ENCODE measurements at regions of chr2 and their contacts with region 1.

Region 1: DNA sequence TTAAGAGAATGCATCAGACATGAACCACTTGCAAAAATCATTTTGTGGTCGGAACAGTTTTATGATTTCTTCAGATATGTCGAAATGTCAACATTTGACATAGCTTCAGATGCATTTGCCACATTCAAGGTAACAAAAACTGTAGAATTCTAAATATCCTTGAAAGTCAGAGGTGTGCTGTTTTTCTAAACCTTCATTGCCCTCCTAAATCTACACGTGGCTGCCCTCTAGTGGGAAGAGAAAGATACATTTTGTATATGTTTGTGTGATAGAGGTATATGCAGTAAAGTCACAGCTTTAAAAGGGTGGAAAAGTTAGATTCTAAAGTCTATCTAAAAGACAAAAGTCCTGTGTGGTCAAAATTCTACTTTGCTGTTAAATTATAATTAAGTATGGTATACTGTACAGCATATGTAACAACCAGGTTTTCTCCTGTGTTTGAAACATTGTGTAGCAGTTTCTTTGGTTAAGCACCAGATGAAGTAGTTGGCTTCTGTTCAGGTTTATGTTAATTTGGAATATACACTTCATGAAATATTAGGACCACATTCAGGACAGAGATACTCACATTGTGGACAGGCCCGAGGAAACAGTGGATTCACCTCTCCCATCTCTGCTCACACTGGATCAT is 65.9 kb upstream of the ITM2C start:
- DNase-seq: peak; percentile 58
- ATAC-seq: no peak
- H3K4me3 Mint-ChIP-seq: no peak overlapping the region
- H3K27ac Mint-ChIP-seq: peak overlapping the region; percentile 69
- H3K4me1 Mint-ChIP-seq: peaks cover 16% of the 10 kb centered on the region
- H3K27me3 Mint-ChIP-seq: no peaks in the 10 kb centered on the region
- CTCF ChIP-seq: peak; percentile 93

Region 2: GRCh38 chr2:230326453-230327417 is 472.1 kb before region 1 on chr2 and contains the start of gene SP140L:
- CTCF ChIA-PET with region 1: interaction called, 3 read pairs
- POLR2A ChIA-PET with region 1: no interaction called
- intact Hi-C with region 1: loop called (anchors 10 kb)
- DNase-seq: peak; percentile 90
- ATAC-seq: peak; percentile 98
- H3K4me3 Mint-ChIP-seq: peak within 1 kb of the TSS; percentile 97
- H3K27ac Mint-ChIP-seq: peak within 1 kb of the TSS; percentile 93
- H3K4me1 Mint-ChIP-seq: peaks cover 60% of the 10 kb centered on the region
- H3K27me3 Mint-ChIP-seq: no peaks in the 10 kb centered on the region
- CTCF ChIP-seq: no peak
- total RNA-seq, gene SP140L: 43.7 to 43.8 TPM

Region 3: DNA sequence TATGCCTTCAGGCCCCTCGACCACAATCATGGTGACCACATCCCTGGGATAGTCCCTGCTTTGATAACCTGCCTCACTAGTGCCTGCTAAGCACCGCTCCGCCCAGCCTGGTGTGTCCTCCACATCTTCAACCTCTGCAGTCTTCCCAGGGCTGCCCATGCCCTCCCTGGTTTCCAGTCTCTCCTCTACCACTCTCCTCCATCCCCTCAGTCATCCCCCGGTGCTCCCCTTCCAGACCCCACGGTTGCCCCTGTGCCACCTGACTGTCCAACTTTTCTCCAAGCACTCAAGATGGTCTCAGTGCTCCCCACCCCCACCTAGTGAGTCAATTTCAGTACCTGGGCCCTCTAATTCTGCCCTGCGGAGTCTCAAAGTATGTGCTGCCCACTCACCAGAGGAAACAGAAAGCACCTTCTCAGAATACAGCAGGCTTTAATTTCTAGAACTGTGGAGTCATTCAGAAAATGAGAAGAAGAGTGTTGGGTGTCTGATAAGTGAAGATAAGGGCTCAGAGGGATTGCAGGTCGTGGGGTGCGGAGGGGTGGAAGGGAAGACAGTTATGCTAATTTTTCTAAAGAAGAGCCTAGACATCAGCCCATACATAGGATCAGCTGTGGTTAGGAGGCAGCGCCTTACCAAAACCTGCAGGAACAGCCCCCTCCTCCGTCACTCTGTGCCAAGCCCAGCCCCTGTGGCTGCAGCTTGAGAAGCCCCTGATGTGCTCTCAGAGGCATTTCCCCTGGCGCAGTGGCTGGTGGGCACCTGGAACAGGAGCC is 139.8 kb before region 1 on chr2:
- CTCF ChIA-PET with region 1: interaction called, 11 read pairs
- POLR2A ChIA-PET with region 1: interaction called, 9 read pairs
- intact Hi-C with region 1: loop called (anchors 2 kb)
- DNase-seq: peak; percentile 92
- ATAC-seq: peak; percentile 71
- H3K4me3 Mint-ChIP-seq: peak overlapping the region; percentile 71
- H3K27ac Mint-ChIP-seq: peak overlapping the region; percentile 97
- H3K4me1 Mint-ChIP-seq: peaks cover 95% of the 10 kb centered on the region
- H3K27me3 Mint-ChIP-seq: no peaks in the 10 kb centered on the region
- CTCF ChIP-seq: no peak

Region 4: GRCh38 chr2:230721712-230722111 is 77.2 kb before region 1 on chr2:
- CTCF ChIA-PET with region 1: interaction called, 29 read pairs
- POLR2A ChIA-PET with region 1: interaction called, 5 read pairs
- intact Hi-C with region 1: no loop called
- DNase-seq: no peak
- ATAC-seq: no peak
- H3K4me3 Mint-ChIP-seq: peak overlapping the region; percentile 27
- H3K27ac Mint-ChIP-seq: peak overlapping the region; percentile 81
- H3K4me1 Mint-ChIP-seq: peaks cover 82% of the 10 kb centered on the region
- H3K27me3 Mint-ChIP-seq: no peaks in the 10 kb centered on the region
- CTCF ChIP-seq: no peak

Region 5: DNA sequence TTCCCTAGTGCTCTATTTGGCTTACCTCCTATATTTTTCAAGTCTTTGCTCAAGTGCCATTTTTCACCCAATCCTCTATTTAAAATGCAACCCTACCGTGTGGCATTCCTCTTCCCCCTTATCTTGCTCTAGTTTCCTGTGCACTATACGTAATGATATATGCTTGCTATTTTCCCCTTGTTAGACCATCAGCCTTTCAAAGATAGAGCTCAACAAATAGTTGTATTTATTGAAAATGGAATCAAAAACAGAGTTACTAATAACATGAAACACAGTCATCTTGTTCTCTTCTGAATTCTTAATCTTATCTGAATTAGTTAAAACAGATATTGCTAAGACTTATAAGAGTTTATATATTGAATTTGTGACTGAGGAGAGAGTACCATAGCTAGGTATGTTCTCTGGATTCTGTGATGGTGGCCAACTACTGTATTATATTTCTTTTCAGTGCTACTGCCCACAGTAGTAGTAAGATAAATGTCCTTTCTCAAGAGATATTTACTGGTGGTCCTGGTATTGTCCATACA is 31.0 kb before region 1 on chr2:
- CTCF ChIA-PET with region 1: interaction called, 14 read pairs
- POLR2A ChIA-PET with region 1: interaction called, 5 read pairs
- intact Hi-C with region 1: no loop called
- DNase-seq: no peak
- ATAC-seq: no peak
- H3K4me3 Mint-ChIP-seq: no peak overlapping the region
- H3K27ac Mint-ChIP-seq: peak overlapping the region; percentile 44
- H3K4me1 Mint-ChIP-seq: peaks cover 76% of the 10 kb centered on the region
- H3K27me3 Mint-ChIP-seq: no peaks in the 10 kb centered on the region
- CTCF ChIP-seq: no peak

Region 6: DNA sequence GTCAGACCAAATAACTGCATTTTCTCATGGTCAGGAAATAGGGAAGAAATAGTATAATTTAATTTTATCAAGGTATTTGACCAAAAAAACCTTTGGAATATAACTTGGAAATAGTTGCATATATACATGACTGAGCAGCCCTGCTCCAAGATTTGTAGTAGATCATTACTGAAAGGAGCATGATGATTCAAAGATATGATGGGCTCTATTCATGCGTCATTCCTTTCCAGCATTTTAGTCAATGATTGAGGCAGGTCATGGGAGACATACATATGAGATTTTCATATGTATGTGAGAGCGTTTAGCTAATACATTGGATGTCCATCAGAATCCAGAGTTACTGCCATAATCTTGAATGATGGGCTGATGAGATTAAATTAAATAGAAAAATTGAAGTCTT is 11.8 kb before region 1 on chr2:
- CTCF ChIA-PET with region 1: interaction called, 16 read pairs
- POLR2A ChIA-PET with region 1: interaction called, 19 read pairs
- intact Hi-C with region 1: no loop called
- DNase-seq: no peak
- ATAC-seq: no peak
- H3K4me3 Mint-ChIP-seq: no peak overlapping the region
- H3K27ac Mint-ChIP-seq: peak overlapping the region; percentile 35
- H3K4me1 Mint-ChIP-seq: peaks cover 62% of the 10 kb centered on the region
- H3K27me3 Mint-ChIP-seq: no peaks in the 10 kb centered on the region
- CTCF ChIP-seq: no peak